Activated naive CD4-positive, alpha-beta T cell treated with anti-CD3 and anti-CD28 coated beads for 36 hours (primary cell): ENCODE measurements at regions of chr3 and their contacts with region 1.

Region 1: GRCh38 chr3:173703771-173704170 is 306.2 kb downstream of the NLGN1 start:
- DNase-seq: no peak
- H3K4me3 Mint-ChIP-seq: no peak overlapping the region
- H3K27ac Mint-ChIP-seq: no peak overlapping the region
- H3K4me1 Mint-ChIP-seq: no peaks in the 10 kb centered on the region
- H3K27me3 Mint-ChIP-seq: no peaks in the 10 kb centered on the region

Region 2: GRCh38 chr3:173676094-173676493 is 27.7 kb before region 1 on chr3:
- CTCF ChIA-PET with region 1: no interaction called
- intact Hi-C with region 1: loop called (anchors 1 kb)
- DNase-seq: no peak
- H3K4me3 Mint-ChIP-seq: no peak overlapping the region
- H3K27ac Mint-ChIP-seq: no peak overlapping the region
- H3K4me1 Mint-ChIP-seq: no peaks in the 10 kb centered on the region
- H3K27me3 Mint-ChIP-seq: no peaks in the 10 kb centered on the region